Lower lobe of right lung (tissue), 2 donors: ENCODE measurements at regions of chr7 and their contacts with region 1.

Region 1: DNA sequence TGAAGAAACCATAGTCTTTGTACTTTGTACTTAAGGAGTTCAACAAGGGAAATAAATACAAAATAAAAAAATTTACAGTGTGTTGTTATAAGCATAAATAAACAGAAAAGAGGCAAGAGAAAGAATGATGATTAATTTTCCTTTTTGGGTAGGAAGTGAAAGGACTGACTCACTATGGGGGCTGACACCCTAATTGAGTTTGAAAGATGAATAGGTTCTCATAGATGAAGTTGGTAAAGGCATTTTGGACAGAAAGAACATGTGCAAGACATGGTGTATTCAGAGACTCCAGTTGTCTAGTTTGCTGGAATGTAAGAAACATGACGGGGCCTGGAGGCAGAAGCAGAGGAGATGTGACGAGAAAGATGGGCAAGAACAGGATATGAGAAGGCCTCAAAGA is 83.7 kb downstream of the VPS50 start:
- DNase-seq: no peak
- ATAC-seq: no peak
- H3K4me3 ChIP-seq: no peak overlapping the region
- H3K27ac ChIP-seq: no peak overlapping the region
- H3K4me1 ChIP-seq: no peaks in the 10 kb centered on the region
- H3K27me3 ChIP-seq: no peaks in the 10 kb centered on the region
- CTCF ChIP-seq: no peak

Region 2: DNA sequence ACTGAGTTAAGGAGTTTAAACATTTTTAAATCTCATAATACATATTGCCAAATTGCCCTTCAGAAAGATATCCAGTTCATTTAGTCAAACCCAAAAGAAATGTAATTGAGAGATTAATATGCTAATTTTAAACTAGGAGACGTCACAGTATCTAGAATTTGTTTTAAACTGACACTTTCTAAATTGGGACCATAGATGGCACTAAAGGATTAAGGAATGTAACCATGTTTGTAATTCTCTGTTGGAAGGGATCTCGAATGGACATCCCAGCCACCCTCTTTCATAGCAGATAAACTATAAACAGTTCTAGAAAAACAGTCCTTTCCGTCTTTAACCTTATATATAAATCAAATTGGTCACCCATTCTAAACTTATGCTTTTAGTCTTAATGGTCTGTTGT is 137.7 kb before region 1 on chr7:
- intact Hi-C with region 1: no loop called
- DNase-seq: no peak
- ATAC-seq: no peak
- H3K4me3 ChIP-seq: no peak overlapping the region
- H3K27ac ChIP-seq: no peak overlapping the region
- H3K4me1 ChIP-seq: no peaks in the 10 kb centered on the region
- H3K27me3 ChIP-seq: no peaks in the 10 kb centered on the region
- CTCF ChIP-seq: no peak

Region 3: DNA sequence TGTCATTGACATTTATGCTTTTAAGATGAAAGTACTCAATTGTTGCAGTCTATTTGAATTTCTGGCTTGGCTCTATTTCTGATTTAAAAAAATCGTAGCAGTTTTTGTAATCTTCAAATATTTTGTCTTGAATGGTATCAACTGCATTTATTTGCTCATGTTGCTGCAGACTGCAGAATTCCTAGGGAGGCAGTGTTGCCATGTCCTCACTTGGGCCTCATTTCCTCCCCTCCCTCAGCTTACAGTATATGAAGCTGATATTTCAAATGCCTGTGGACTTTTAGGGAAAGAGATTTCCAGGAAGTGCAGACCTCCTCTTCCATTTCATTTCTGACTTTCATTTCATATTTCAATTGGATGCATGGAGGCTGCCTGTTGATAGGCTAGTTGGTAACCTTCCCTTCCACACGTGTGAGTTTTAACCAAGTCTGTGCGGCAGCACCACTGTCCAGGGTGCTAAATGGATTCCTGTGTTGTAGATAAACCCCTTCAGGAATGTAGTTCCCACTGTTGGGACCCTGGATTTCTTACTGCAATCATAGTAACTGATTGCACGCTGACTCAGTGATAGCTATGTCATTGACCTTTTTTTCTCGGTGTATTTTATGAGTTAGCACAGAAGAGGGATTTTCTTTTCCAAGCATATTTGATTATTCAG is 66.3 kb before region 1 on chr7:
- intact Hi-C with region 1: loop called (anchors 10 kb)
- DNase-seq: no peak
- ATAC-seq: no peak
- H3K4me3 ChIP-seq: no peak overlapping the region
- H3K27ac ChIP-seq: no peak overlapping the region
- H3K4me1 ChIP-seq: no peaks in the 10 kb centered on the region
- H3K27me3 ChIP-seq: no peaks in the 10 kb centered on the region
- CTCF ChIP-seq: no peak

Region 4: GRCh38 chr7:93374345-93374940 is 58.5 kb after region 1 on chr7:
- intact Hi-C with region 1: no loop called
- DNase-seq: no peak
- ATAC-seq: no peak
- H3K4me3 ChIP-seq: no peak overlapping the region
- H3K27ac ChIP-seq: no peak overlapping the region
- H3K4me1 ChIP-seq: no peaks in the 10 kb centered on the region
- H3K27me3 ChIP-seq: no peaks in the 10 kb centered on the region
- CTCF ChIP-seq: peak; percentile 62